Stomach (tissue), 19 donors: ENCODE measurements at regions of chr16 and their contacts with region 1.

Region 1: DNA sequence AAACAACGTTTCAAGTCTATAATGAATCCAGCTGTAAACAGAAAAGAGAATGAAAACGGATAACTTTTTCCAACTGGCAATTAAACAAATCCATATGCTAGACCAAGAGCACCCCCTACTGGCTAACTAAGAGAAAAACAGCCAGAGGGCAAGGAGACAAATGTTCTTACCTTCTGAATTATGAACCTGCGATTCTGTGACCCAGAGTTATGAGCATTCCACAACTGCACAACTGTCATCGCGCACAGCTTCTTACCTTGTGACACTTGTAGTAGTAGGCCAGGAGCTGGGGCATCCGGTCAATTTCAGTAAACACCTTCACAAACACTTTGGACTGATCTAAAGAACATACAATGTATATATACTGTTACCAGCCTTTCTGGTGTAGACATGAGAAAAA is 18.6 kb downstream of the COG7 start:
- DNase-seq: peak in 1 of 2 donors; percentile 88
- H3K4me3 ChIP-seq: no peak overlapping the region
- H3K27ac ChIP-seq: peak overlapping the region in 2 of 5 donors; percentile 3 to 54
- H3K4me1 ChIP-seq: peaks cover 0 to 36% (median 9%) of the 10 kb centered on the region in 4 donors
- H3K27me3 ChIP-seq: no peaks in the 10 kb centered on the region
- CTCF ChIP-seq: peak in 5 of 7 experiments; percentile 61 to 93 (median 82)
- EP300 ChIP-seq: no peak
- POLR2A ChIP-seq: no peak

Region 2: DNA sequence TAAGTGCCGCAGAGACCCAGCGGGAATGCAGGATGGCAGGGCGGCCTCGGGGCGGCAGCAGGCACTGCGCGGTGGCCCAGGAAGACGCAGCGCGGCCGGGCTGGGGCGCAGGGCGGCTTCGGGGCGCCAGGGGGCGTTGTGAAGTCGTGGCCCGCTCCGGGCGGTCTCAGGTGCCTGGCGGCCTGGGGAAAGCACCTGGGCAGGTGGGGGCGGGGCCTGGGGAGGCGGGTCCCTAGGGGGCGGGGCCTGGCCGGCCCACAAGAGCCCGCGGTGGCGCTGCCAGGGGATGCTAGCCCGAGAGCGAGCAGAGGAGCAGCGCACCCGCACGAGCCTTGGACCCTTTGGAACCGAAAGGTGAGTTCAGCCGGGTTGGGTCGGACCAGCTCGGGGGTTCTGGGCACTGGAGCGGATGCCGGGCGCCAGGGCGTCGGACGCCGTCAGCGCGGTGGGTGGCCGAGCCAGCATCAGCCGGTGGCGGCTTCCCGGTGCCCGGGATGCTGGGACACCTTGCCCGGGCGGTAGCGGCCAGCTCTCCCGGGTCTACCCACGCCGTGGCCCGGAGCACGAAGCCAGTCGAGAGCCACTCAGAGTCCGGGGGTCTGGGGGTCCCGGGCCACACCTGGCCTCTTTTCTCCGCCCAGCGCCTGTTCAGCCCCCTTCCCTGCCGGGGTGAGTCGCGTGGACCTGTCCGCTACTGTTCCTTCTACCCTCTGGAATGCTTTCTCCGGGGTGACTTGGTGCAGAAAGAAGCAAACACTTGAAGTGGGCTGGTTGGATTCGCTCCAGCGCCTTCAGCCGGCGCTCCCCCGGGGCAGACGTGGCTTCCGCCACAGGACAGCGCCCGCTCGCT is 251.7 kb before region 1 on chr16 and contains the start of gene SCNN1G:
- intact Hi-C with region 1: loop called (anchors 5 kb)
- DNase-seq: peak; percentile 93 to 95
- H3K4me3 ChIP-seq: peak within 1 kb of the TSS; percentile 49 to 75 (median 50)
- H3K27ac ChIP-seq: peak within 1 kb of the TSS; percentile 2 to 67 (median 29)
- H3K4me1 ChIP-seq: peaks cover 13 to 34% (median 28%) of the 10 kb centered on the region in 4 donors
- H3K27me3 ChIP-seq: peaks cover 0 to 84% (median 15%) of the 10 kb centered on the region in 3 donors
- CTCF ChIP-seq: peak in 5 of 7 experiments; percentile 64 to 99 (median 98)
- EP300 ChIP-seq: no peak
- POLR2A ChIP-seq: no peak
- total RNA-seq, gene SCNN1G: 3.2 to 20.4 (median 11.3) TPM